Activated CD8-positive, alpha-beta T cell treated with anti-CD3 and anti-CD28 coated beads, Interleukin-2, amount 10 ng/mL, durations not matched to agents 7 days and 5 days (primary cell): ENCODE measurements at regions of chr9 and their contacts with region 1.

Region 1: DNA sequence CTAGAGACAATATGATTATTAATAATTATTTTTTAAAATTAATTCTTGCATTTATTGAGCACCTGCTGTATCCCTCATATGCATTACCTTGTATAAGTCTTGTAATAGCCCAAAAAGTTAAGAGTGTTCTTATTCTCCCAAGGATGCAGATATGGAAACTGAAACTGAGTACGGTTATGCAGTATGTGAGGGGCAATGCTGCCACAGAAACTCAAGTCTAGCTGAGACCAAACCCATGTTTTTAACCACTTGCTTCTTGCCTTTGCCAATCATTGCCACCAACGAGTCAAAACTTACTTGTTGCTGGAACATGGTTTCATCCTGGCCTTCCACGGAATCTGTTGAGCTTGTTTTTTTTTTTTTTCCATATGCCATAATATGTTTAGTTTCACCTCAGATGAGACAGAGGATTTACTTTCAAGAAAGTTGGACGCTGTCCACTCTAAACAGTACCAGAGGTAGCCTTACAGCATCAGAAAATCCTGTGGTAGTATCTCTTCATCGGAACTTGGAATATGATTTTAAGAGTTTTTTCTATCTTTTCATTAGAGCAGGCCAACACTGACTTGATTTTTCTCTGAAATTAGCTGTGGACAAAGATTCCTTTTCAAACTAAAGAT is 27.9 kb downstream of the DOCK8 start:
- DNase-seq: peak; percentile 48
- ATAC-seq: peak; percentile 82
- H3K4me3 Mint-ChIP-seq: peak overlapping the region; percentile 52
- H3K27ac Mint-ChIP-seq: peak overlapping the region; percentile 82
- H3K4me1 Mint-ChIP-seq: peaks cover 68% of the 10 kb centered on the region
- H3K27me3 Mint-ChIP-seq: no peaks in the 10 kb centered on the region

Region 2: DNA sequence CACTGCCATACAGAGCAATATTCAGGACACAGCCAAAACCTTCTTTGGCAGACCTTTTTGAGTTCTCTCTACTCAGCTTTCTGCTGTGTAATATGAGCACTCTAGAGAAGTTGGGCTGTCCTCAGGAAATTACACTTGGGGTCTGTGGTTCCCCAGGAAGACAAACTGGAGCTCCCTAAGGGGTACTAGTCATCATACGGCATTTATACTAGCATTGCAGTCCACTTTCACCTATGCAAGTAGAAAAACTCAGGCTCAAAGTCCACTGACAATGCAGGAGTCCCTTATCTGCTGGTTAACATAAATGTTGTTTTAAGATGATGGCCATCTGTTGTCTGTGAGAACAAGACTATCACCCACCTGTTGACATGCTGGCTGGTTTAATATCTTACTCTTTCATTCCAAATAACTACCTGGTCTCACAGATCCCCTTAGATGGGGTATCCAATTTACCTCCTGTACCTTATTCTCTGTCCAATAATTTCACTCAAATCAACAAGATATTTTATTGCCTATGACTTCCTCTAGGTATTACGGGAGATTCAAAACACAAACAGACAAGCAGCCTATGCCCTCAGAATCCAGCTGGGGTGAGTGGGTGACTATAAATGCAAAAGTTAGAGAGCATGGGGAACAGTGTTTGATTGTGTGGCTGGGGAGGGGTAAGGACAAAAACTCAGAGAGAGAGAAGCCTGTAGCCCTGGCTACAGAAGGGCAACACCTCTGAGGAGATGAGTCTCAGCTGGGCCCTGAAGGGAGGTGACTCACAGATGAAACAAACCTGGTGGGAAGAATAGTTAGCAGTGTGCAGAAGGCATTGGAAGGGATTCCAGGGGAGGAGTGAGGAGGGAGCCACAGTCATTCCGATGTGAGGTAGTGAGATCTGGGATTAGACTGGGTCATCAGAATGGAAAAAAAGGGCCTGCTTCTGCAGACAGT is 17.7 kb before region 1 on chr9:
- CTCF ChIA-PET with region 1: interaction called, 13 read pairs
- POLR2A ChIA-PET with region 1: interaction called, 8 read pairs
- DNase-seq: no peak
- ATAC-seq: peak; percentile 45
- H3K4me3 Mint-ChIP-seq: no peak overlapping the region
- H3K27ac Mint-ChIP-seq: no peak overlapping the region
- H3K4me1 Mint-ChIP-seq: peaks cover 47% of the 10 kb centered on the region
- H3K27me3 Mint-ChIP-seq: no peaks in the 10 kb centered on the region